OCI-LY7 (cell line): ENCODE measurements at regions of chr2 and their contacts with region 1.

Region 1: GRCh38 chr2:170571612-170572011 is 143.5 kb upstream of the SP5 start:
- DNase-seq: no peak
- H3K4me3 ChIP-seq: no peak overlapping the region
- H3K27ac ChIP-seq: no peak overlapping the region
- H3K4me1 ChIP-seq: no peaks in the 10 kb centered on the region
- CTCF ChIP-seq: no peak

Region 2: DNA sequence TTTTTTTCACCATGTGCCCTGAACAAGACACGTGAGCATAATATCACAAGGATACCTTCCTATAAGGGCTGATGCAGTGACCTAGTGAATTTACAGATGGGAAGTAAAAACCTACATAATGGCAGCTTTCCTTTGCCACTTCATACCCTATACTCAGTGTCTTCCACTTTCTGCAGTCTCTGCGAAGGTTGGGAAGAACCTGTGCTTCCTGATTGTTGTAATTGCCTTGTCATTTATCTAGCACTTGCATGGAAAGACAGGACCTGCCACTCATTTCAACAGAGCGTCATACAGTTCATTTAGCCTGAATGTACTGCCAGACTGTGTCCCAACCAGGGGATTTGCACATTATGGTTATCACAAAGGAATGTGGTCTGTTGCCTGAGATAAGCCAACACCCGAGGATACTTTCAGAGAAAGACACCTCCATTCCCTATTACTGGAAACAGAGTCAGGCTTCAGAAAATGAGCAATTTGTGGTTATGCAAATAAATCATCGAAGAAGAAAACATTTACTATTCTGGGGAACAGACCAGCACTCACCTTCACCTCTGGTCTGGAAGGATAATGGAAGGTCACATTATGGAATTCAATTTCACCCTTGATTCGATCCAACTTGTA is 1595.5 kb before region 1 on chr2:
- CTCF ChIA-PET with region 1: no interaction called
- POLR2A ChIA-PET with region 1: no interaction called
- intact Hi-C with region 1: no loop called
- DNase-seq: no peak
- H3K4me3 ChIP-seq: no peak overlapping the region
- H3K27ac ChIP-seq: no peak overlapping the region
- H3K4me1 ChIP-seq: no peaks in the 10 kb centered on the region
- CTCF ChIP-seq: no peak

Region 3: GRCh38 chr2:170369894-170370293 is 201.7 kb before region 1 on chr2:
- CTCF ChIA-PET with region 1: no interaction called
- POLR2A ChIA-PET with region 1: no interaction called
- intact Hi-C with region 1: loop called (anchors 5 kb)
- DNase-seq: peak; percentile 30
- H3K4me3 ChIP-seq: no peak overlapping the region
- H3K27ac ChIP-seq: no peak overlapping the region
- H3K4me1 ChIP-seq: no peaks in the 10 kb centered on the region
- CTCF ChIP-seq: peak; percentile 76

Region 4: DNA sequence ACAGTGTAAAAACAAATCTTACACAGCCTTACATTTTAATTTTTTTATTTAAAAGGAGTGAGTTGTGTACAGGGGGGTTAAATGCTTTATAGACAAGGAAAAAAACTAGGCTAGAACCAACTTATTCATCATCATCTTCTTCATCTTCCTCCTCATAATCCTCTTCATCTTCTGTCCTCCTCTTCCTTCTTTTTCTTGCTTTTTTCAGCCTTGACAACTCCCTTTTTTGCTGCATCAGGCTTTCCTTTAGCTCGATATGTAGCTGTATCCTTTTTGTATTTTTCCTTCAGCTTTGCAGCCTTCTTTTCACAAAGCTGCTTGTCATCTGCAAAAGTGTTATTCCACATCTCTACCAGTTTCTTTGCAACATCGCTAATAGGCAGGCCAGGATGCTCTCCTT is 29.9 kb after region 1 on chr2:
- CTCF ChIA-PET with region 1: no interaction called
- POLR2A ChIA-PET with region 1: no interaction called
- intact Hi-C with region 1: no loop called
- DNase-seq: no peak
- H3K4me3 ChIP-seq: no peak overlapping the region
- H3K27ac ChIP-seq: no peak overlapping the region
- H3K4me1 ChIP-seq: no peaks in the 10 kb centered on the region
- CTCF ChIP-seq: no peak

Region 5: GRCh38 chr2:170689481-170689880 is 117.9 kb after region 1 on chr2:
- CTCF ChIA-PET with region 1: no interaction called
- POLR2A ChIA-PET with region 1: no interaction called
- intact Hi-C with region 1: no loop called
- DNase-seq: no peak
- H3K4me3 ChIP-seq: no peak overlapping the region
- H3K27ac ChIP-seq: no peak overlapping the region
- H3K4me1 ChIP-seq: no peaks in the 10 kb centered on the region
- CTCF ChIP-seq: no peak